CD14-positive monocyte (primary cell): ENCODE measurements at regions of chr7 and their contacts with region 1.

Region 1: GRCh38 chr7:112105584-112106530 is 100.3 kb downstream of the DOCK4 start:
- DNase-seq: peak in 2 of 3 donors; percentile 12 to 23
- H3K4me3 ChIP-seq: no peak overlapping the region
- H3K4me3 Mint-ChIP-seq: peak overlapping the region in 1 of 2 donors; percentile 43
- H3K27ac ChIP-seq: no peak overlapping the region
- H3K27ac Mint-ChIP-seq: peak overlapping the region in 3 of 7 donors; percentile 2 to 49 (median 22)
- H3K4me1 ChIP-seq: peaks cover 3 to 13% of the 10 kb centered on the region in 2 donors
- H3K4me1 Mint-ChIP-seq: peaks cover 10% of the 10 kb centered on the region
- H3K27me3 ChIP-seq: no peaks in the 10 kb centered on the region
- H3K27me3 Mint-ChIP-seq: peaks cover 2 to 6% (median 4%) of the 10 kb centered on the region in 3 donors
- CTCF ChIP-seq: no peak

Region 2: DNA sequence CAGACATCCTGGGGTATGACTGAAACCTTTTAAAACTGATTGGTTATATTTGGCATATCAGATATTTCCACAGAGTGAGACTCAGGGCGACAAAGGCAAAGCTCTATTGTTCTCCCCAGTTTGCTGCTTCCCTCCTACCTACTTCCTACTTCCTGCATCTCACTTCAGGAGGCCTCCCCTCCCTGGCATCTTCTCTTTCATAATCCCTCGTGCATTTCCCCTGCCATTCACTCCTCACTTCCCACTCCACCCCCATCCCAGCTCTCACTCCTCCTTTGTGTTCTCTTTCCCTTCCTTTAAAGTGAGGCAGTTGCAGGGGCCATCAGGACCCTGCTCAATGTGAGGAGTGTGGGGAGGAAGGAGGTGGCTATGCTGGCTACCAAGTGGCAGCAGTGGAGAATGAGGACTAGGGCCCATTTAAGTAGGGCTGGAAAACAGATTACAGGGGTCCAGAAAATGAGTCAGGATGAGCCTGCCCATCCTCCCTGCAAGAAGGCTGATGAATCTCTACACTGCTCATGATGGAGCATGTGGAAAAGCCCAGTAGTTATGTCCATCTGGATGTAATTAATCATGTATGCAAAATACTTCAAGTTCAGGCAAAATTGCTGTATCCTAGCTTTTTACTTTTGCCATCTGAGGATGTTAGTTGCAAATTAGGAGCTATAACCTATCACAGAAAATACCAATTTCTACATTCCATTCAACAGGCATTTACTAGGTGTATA is 231.7 kb before region 1 on chr7:
- intact Hi-C with region 1: no loop called
- DNase-seq: no peak
- H3K4me3 ChIP-seq: no peak overlapping the region
- H3K4me3 Mint-ChIP-seq: no peak overlapping the region
- H3K27ac ChIP-seq: no peak overlapping the region
- H3K27ac Mint-ChIP-seq: no peak overlapping the region
- H3K4me1 ChIP-seq: no peaks in the 10 kb centered on the region
- H3K4me1 Mint-ChIP-seq: no peaks in the 10 kb centered on the region
- H3K27me3 ChIP-seq: no peaks in the 10 kb centered on the region
- H3K27me3 Mint-ChIP-seq: peaks cover 0 to 2% (median 1%) of the 10 kb centered on the region in 3 donors
- CTCF ChIP-seq: no peak

Region 3: GRCh38 chr7:112001089-112001826 is 104.6 kb before region 1 on chr7:
- intact Hi-C with region 1: no loop called
- DNase-seq: peak in 1 of 3 donors; percentile 69
- H3K4me3 ChIP-seq: no peak overlapping the region
- H3K4me3 Mint-ChIP-seq: no peak overlapping the region
- H3K27ac ChIP-seq: no peak overlapping the region
- H3K27ac Mint-ChIP-seq: peak overlapping the region in 2 of 7 donors; percentile 2 to 66
- H3K4me1 ChIP-seq: no peaks in the 10 kb centered on the region
- H3K4me1 Mint-ChIP-seq: peaks cover 3% of the 10 kb centered on the region
- H3K27me3 ChIP-seq: no peaks in the 10 kb centered on the region
- H3K27me3 Mint-ChIP-seq: peaks cover 0 to 1% (median 0%) of the 10 kb centered on the region in 3 donors
- CTCF ChIP-seq: no peak

Region 4: DNA sequence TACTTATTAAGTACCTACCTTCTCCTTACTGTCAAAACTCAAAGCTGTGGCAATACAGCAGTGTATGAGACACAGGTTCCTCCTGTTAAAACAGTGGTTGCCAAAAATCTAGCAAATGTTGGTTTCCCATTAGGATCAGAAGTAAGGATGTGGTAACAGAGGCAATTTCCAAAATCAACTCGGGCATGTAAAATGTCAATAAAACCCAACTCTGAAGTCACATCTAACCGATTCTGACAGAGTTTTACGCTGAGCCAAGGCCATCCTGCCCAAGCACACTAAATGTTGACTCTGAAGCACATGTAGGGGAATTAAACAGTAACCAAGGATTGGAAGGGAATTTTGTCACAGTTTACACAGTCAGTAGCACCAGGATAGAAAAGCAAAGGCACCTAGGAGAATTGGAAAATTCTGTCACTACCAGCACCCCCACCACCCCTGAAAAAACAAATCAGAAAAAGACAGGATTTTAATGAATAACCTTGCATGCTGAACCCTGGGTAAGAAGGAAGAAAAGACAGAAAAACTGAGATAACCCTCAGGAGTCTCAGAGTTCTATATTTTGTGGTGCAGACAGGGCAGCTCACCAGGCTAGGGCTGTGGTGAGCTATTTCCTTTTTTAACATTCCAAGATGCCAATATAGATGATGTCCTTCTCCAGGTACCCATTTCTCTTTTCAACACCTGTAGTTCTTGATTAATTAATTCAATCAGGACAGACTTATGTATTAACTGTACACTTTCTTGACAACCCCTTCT is 19.2 kb before region 1 on chr7:
- intact Hi-C with region 1: loop called in 1 of 2 experiments (anchors 2 kb)
- DNase-seq: no peak
- H3K4me3 ChIP-seq: no peak overlapping the region
- H3K4me3 Mint-ChIP-seq: peak overlapping the region in 1 of 2 donors; percentile 46
- H3K27ac ChIP-seq: no peak overlapping the region
- H3K27ac Mint-ChIP-seq: peak overlapping the region in 1 of 7 donors; percentile 56
- H3K4me1 ChIP-seq: peaks cover 35 to 45% of the 10 kb centered on the region in 2 donors
- H3K4me1 Mint-ChIP-seq: peaks cover 40% of the 10 kb centered on the region
- H3K27me3 ChIP-seq: peaks cover 3 to 4% of the 10 kb centered on the region in 2 donors
- H3K27me3 Mint-ChIP-seq: peaks cover 0 to 7% (median 7%) of the 10 kb centered on the region in 3 donors
- CTCF ChIP-seq: no peak